PC-9 (cell line): ENCODE measurements at regions of chr13 and their contacts with region 1.

Region 1: GRCh38 chr13:60169239-60170031 is 5.7 kb upstream of the DIAPH3 start:
- DNase-seq: no peak
- H3K4me3 ChIP-seq: no peak overlapping the region
- H3K27ac ChIP-seq: no peak overlapping the region
- H3K4me1 ChIP-seq: peaks cover 9% of the 10 kb centered on the region; the same call in 1 of the 2 replicates
- H3K27me3 ChIP-seq: no peaks in the 10 kb centered on the region
- CTCF ChIP-seq: 0 out of 2 replicates have a peak, but pooled peaks have one; percentile 19

Region 2: DNA sequence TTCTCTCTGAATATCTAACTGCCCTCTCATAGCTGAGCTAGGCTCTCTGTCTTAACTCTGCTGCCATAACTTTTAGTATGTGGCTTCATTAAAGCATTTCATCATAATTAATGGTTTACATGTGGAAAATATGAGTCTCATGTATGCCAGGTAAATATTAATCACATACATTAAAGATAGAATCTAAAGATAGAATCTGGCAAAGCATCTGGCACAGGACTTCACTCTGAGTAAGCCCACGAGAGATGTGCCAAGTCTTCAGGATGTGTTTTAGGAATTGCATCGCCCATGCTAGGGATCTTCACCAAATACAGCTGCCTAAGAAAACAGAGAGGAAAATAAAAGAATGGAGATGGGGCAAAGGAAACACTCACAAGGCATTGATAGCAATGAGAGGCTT is 291.5 kb before region 1 on chr13:
- CTCF ChIA-PET with region 1: no interaction called
- POLR2A ChIA-PET with region 1: no interaction called
- intact Hi-C with region 1: no loop called
- DNase-seq: no peak
- H3K4me3 ChIP-seq: no peak overlapping the region
- H3K27ac ChIP-seq: no peak overlapping the region
- H3K4me1 ChIP-seq: no peaks in the 10 kb centered on the region
- H3K27me3 ChIP-seq: no peaks in the 10 kb centered on the region
- CTCF ChIP-seq: no peak

Region 3: GRCh38 chr13:60155978-60156377 is 13.5 kb before region 1 on chr13:
- CTCF ChIA-PET with region 1: interaction called, 10 read pairs
- POLR2A ChIA-PET with region 1: no interaction called
- intact Hi-C with region 1: no loop called
- DNase-seq: no peak
- H3K4me3 ChIP-seq: no peak overlapping the region
- H3K27ac ChIP-seq: no peak overlapping the region
- H3K4me1 ChIP-seq: no peaks in the 10 kb centered on the region
- H3K27me3 ChIP-seq: no peaks in the 10 kb centered on the region
- CTCF ChIP-seq: no peak